ENCODE measurements at regions of chr19 and their contacts with region 1.

Region 1: GRCh38 chr19:45340232-45340898 is at the start of gene KLC3:
- DNase-seq: peak; percentile 19
- H3K4me3 Mint-ChIP-seq: peak within 1 kb of the TSS; percentile 38
- H3K27ac Mint-ChIP-seq: no peak within 1 kb of the TSS
- H3K4me1 Mint-ChIP-seq: peaks cover 4% of the 10 kb centered on the region
- H3K27me3 Mint-ChIP-seq: peaks cover 18% of the 10 kb centered on the region
- total RNA-seq, gene KLC3: not detected

Region 2: GRCh38 chr19:45250832-45251451 is 89.4 kb before region 1 on chr19 and contains the start of gene MARK4:
- CTCF ChIA-PET with region 1: interaction called, 4 read pairs
- intact Hi-C with region 1: loop called (anchors 2 kb)
- DNase-seq: peak; percentile 47
- H3K4me3 Mint-ChIP-seq: peak within 1 kb of the TSS; percentile 79
- H3K27ac Mint-ChIP-seq: no peak within 1 kb of the TSS
- H3K4me1 Mint-ChIP-seq: peaks cover 26% of the 10 kb centered on the region
- H3K27me3 Mint-ChIP-seq: no peaks in the 10 kb centered on the region
- total RNA-seq, gene MARK4: 13.0 to 15.7 TPM

Region 3: GRCh38 chr19:45299719-45300118 is 40.6 kb before region 1 on chr19:
- CTCF ChIA-PET with region 1: no interaction called
- intact Hi-C with region 1: no loop called
- DNase-seq: no peak
- H3K4me3 Mint-ChIP-seq: no peak overlapping the region
- H3K27ac Mint-ChIP-seq: no peak overlapping the region
- H3K4me1 Mint-ChIP-seq: no peaks in the 10 kb centered on the region
- H3K27me3 Mint-ChIP-seq: no peaks in the 10 kb centered on the region

Region 4: DNA sequence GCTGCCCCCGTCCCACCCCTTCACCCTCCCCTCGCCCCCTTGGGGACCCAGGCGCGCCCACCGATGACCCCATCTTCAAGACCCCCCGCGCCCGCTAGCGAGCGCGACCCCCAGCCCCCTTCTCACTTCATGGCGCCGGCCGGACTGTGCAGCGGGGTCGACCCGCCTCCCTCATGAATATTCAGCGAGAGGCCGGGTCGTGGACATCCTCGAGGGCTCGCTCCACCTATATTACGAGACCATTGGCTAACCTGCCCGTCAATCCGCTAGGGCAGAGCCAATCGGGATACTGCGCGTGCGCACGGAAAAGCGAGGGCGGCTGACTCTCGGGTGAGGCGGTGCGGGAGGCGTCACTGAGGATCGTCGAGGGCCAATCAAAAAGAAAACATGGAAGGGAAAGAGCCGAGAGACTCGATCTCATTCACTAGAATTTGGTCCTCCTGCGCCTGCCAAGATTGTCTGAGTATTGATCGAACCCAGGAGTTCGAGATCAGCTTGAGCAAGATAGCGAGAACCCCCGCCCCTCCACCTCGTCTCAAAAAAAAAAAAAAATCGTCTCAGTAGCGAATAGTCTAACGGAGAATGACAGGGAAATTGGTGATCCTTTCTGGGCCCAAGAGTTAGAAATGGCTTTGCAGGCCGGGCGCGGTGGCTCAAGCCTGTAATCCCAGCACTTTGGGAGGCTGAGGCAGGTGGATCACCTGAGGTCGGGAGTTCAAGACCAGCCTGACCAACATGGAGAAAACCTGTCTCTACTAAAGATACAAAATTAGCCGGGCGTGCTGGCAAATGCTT is 30.2 kb after region 1 on chr19 and contains the start of gene ERCC2:
- CTCF ChIA-PET with region 1: interaction called, 3 read pairs
- intact Hi-C with region 1: loop called (anchors 1 kb)
- DNase-seq: peak; percentile 100
- H3K4me3 Mint-ChIP-seq: peak within 1 kb of the TSS; percentile 93
- H3K27ac Mint-ChIP-seq: peak within 1 kb of the TSS; percentile 91
- H3K4me1 Mint-ChIP-seq: peaks cover 5% of the 10 kb centered on the region
- H3K27me3 Mint-ChIP-seq: no peaks in the 10 kb centered on the region
- total RNA-seq, gene ERCC2: 20.6 to 22.9 TPM

Region 5: GRCh38 chr19:45385392-45386221 is 45.2 kb after region 1 on chr19:
- CTCF ChIA-PET with region 1: no interaction called
- intact Hi-C with region 1: no loop called
- DNase-seq: no peak
- H3K4me3 Mint-ChIP-seq: no peak overlapping the region
- H3K27ac Mint-ChIP-seq: no peak overlapping the region
- H3K4me1 Mint-ChIP-seq: peaks cover 3% of the 10 kb centered on the region
- H3K27me3 Mint-ChIP-seq: peaks cover 25% of the 10 kb centered on the region

Region 6: DNA sequence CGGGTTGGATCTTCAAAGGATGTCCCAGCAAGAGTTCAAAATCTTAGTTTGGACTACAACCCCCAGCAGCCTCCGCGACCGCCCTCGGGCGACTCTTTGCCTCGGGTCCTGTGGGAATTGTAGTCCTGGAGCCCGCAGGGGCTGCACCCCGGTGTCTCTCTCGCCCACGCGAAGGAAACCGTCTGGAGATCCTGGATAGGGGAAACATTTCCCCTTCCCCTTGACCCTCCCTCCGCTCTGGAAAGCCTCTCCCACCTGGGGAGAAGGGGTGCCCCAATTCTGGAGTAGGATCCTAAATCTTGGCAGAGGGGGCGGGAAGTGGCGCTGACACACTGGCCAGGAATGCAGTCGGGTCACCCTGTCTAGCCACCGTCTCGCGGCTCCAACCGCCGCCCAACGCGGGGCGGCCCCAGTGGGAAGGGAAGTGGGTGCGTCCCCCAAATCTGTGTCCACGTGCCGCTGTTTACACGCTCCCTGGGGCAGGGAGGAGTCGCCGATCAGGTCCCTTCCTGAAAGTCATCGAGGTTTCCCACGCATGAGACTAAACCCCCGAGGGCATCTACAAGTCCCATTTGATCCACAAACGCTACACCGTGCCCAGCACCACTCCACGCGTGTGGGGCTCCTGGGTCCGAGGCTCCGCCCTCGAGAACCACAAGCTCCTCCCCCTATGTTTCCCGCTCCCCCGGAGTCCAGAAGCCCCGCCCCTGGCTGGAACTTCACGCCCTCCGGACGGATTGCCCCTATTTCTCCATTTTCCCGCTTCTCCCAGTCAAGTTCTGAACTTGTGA is 65.3 kb after region 1 on chr19:
- CTCF ChIA-PET with region 1: no interaction called
- intact Hi-C with region 1: no loop called
- DNase-seq: peak; percentile 90
- H3K4me3 Mint-ChIP-seq: peak overlapping the region; percentile 93
- H3K27ac Mint-ChIP-seq: peak overlapping the region; percentile 93
- H3K4me1 Mint-ChIP-seq: peaks cover 44% of the 10 kb centered on the region
- H3K27me3 Mint-ChIP-seq: peaks cover 30% of the 10 kb centered on the region